ENCODE measurements at regions of chr17 and their contacts with region 1.

Region 1: GRCh38 chr17:50169121-50169764 is 3.4 kb downstream of the SGCA start:
- DNase-seq: peak; percentile 47
- H3K4me3 Mint-ChIP-seq: peak overlapping the region; percentile 15
- H3K27ac Mint-ChIP-seq: peak overlapping the region; percentile 7
- H3K4me1 Mint-ChIP-seq: peaks cover 17% of the 10 kb centered on the region
- H3K27me3 Mint-ChIP-seq: peaks cover 9% of the 10 kb centered on the region

Region 2: GRCh38 chr17:50234581-50234980 is 65.3 kb after region 1 on chr17:
- intact Hi-C with region 1: no loop called
- DNase-seq: no peak
- H3K4me3 Mint-ChIP-seq: no peak overlapping the region
- H3K27ac Mint-ChIP-seq: no peak overlapping the region
- H3K4me1 Mint-ChIP-seq: no peaks in the 10 kb centered on the region
- H3K27me3 Mint-ChIP-seq: peaks cover 41% of the 10 kb centered on the region

Region 3: DNA sequence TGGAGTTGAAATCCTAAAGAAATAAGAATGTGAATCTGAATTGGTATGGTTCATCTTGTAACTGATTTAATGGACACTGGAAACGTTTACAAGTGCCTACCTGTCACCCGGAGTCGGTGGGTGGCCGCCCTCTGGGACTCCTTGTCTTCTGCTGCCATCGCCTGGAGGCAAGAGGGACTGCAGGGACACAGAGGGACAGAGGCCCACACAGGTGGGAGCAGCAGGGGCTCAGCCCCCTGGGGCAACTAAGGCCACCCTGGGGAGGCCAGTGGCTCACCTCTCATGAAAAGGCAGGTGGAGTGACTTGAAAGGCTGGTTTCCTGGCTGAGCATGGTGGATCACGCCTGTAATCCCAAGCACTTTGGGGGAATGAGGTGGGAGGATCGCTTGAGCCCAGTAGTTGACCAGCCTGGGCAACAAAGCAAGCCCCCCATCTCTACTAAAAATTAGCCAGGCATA is 128.2 kb after region 1 on chr17:
- intact Hi-C with region 1: loop called (anchors 1 kb)
- DNase-seq: peak; percentile 69
- H3K4me3 Mint-ChIP-seq: no peak overlapping the region
- H3K27ac Mint-ChIP-seq: no peak overlapping the region
- H3K4me1 Mint-ChIP-seq: peaks cover 8% of the 10 kb centered on the region
- H3K27me3 Mint-ChIP-seq: peaks cover 3% of the 10 kb centered on the region

Measured in activated T-helper 1 cell treated with anti-CD3 and anti-CD28 coated beads, Interleukin-12 subunit alpha, Interleukin-12 subunit beta, Interleukin-2, Interleukin-4 antibody, amounts not matched to agents 30 ng/mL and 10 ng/mL and 1 ng/mL, durations not matched to agents 14 hours and 24 hours and 36 hours (primary cell).